GM12878 (cell line): ENCODE measurements at regions of chr15 and their contacts with region 1.

Region 1: DNA sequence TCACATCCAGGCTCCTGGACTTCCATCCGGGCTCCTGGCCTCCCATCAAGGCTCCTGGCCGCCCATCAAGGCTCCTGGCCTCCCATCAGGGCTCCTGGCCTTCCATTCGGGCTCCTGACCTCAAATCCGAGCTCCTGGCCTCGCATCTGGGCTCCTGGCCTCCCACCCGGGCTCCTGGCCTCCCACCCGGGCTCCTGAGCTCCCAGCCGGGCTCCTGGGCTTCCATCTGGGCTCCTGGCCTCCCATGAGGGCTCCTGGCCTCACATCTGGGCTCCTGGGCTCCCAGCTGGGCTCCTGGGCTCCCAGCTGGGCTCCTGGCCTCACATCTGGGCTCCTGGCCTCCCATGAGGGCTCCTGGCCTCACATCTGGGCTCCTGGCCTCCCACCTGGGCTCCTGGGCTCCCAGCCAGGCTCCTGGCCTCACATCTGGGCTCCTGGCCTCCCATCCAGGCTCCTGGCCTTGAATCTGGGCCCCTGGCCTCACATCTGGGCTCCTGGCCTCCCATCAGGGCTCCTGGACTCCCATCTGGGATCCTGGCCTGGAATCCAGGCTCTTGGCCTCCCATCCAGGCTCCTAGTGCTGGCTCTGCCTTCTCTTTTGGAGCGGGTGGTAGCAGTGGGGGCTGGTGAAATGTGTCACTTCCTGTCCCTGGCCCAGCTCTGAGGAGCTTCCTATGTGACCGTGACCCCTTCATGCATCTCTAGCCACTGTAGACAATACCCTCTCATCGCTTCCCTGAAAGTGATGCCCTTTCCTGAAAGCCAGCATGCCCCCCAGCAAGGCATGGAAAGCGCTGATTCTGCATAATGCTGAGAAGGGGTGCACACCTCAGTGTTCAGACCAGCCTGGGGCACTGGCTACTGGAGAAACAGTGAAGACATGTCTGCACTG is 62.7 kb upstream of the BLM start:
- DNase-seq: no peak
- ATAC-seq: no peak
- H3K4me3 ChIP-seq: no peak overlapping the region
- H3K27ac ChIP-seq: peak overlapping the region; percentile 7
- H3K4me1 ChIP-seq: peaks cover 45% of the 10 kb centered on the region
- H3K27me3 ChIP-seq: no peaks in the 10 kb centered on the region
- CTCF ChIP-seq: no peak
- EP300 ChIP-seq: no peak
- POLR2A ChIP-seq: no peak
- RAD21 ChIP-seq: no peak

Region 2: GRCh38 chr15:89614164-89614563 is 1040.3 kb before region 1 on chr15:
- CTCF ChIA-PET with region 1: no interaction called
- POLR2A ChIA-PET with region 1: no interaction called
- RAD21 ChIA-PET with region 1: no interaction called
- SMC1A ChIA-PET with region 1: no interaction called
- in situ Hi-C with region 1: no loop called
- intact Hi-C with region 1: no loop called
- DNase-seq: no peak
- ATAC-seq: no peak
- H3K4me3 ChIP-seq: no peak overlapping the region
- H3K27ac ChIP-seq: no peak overlapping the region
- H3K4me1 ChIP-seq: no peaks in the 10 kb centered on the region
- H3K27me3 ChIP-seq: no peaks in the 10 kb centered on the region
- CTCF ChIP-seq: no peak
- EP300 ChIP-seq: no peak
- POLR2A ChIP-seq: no peak
- RAD21 ChIP-seq: no peak

Region 3: GRCh38 chr15:90686435-90687218 is 32.1 kb after region 1 on chr15:
- CTCF ChIA-PET with region 1: interaction called, 112 read pairs
- POLR2A ChIA-PET with region 1: interaction called, 45 read pairs
- RAD21 ChIA-PET with region 1: interaction called, 41 read pairs
- SMC1A ChIA-PET with region 1: interaction called, 61 read pairs
- in situ Hi-C with region 1: loop called (anchors 5 kb)
- intact Hi-C with region 1: no loop called
- DNase-seq: peak; percentile 92
- ATAC-seq: peak; percentile 85
- H3K4me3 ChIP-seq: no peak overlapping the region
- H3K27ac ChIP-seq: peak overlapping the region; percentile 99
- H3K4me1 ChIP-seq: peaks cover 53% of the 10 kb centered on the region
- H3K27me3 ChIP-seq: no peaks in the 10 kb centered on the region
- CTCF ChIP-seq: no peak
- EP300 ChIP-seq: peak; percentile 91 to 93
- POLR2A ChIP-seq: no peak
- RAD21 ChIP-seq: no peak; the same call in 1 of the 2 replicates

Region 4: GRCh38 chr15:90691982-90692773 is 37.7 kb after region 1 on chr15:
- CTCF ChIA-PET with region 1: interaction called, 112 read pairs
- POLR2A ChIA-PET with region 1: interaction called, 45 read pairs
- RAD21 ChIA-PET with region 1: interaction called, 41 read pairs
- SMC1A ChIA-PET with region 1: interaction called, 61 read pairs
- in situ Hi-C with region 1: loop called (anchors 5 kb)
- intact Hi-C with region 1: no loop called
- DNase-seq: peak; percentile 84
- ATAC-seq: peak; percentile 73
- H3K4me3 ChIP-seq: no peak overlapping the region
- H3K27ac ChIP-seq: peak overlapping the region; percentile 99
- H3K4me1 ChIP-seq: peaks cover 41% of the 10 kb centered on the region
- H3K27me3 ChIP-seq: no peaks in the 10 kb centered on the region
- CTCF ChIP-seq: no peak
- EP300 ChIP-seq: no peak
- POLR2A ChIP-seq: peak; percentile 68
- RAD21 ChIP-seq: peak; percentile 19; the same call in 1 of the 2 replicates